ENCODE measurements at regions of chr4 and their contacts with region 1.

Region 1: DNA sequence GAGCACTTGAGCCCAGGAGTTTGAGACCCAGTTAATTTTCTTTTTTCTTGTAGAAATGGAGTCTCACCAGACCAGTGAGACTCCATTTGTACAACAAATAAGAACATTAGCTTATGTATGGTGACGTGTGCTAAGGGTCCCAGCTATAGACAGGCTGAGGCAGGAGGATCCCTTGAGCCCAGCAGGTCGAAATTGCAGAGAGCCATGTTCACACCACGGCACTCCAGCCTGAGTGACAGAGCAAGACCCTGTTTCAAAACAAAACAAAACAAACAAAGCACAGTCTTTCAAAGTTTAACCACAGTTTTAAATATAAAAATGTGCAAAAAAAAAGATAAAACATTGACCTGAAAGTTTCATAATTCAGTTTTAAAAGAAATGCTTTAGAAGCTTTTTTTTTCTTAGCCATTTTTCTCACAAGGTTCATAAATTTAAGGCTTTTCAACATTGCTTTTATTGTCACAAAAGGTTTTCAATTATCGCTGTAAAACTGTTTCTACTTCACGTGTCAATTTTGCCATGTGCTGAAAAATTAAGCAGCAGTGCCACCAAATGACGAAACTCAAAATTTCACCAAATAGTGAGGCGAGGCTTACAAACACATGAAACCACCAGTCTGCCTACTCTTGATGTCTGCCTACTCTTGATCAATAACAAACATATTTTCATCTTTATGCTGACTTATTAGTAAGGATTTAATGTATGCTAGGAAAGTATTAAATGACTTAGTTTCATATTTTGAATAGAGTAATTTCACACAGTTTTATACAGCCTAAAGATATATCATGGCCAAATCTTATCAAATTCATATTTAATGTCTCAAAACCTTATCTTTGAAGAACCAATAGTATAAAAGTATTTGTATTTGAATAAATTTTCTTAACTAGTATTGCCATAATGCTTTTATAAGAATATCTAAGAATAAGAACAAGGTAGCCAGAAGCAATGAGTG is 126.3 kb downstream of the NEK1 start:
- DNase-seq: peak in 32 of 42 donors; percentile 14 to 81 (median 50)

Region 2: GRCh38 chr4:169024762-169025161 is 461.3 kb before region 1 on chr4:
- intact Hi-C with region 1: loop called (anchors 5 kb)
- DNase-seq: peak in 13 of 42 donors; percentile 11 to 68 (median 33)